Activated B cell treated with CpG ODN at 0.5 μM for 24 hours (primary cell): ENCODE measurements at regions of chr20 and their contacts with region 1.

Region 1: DNA sequence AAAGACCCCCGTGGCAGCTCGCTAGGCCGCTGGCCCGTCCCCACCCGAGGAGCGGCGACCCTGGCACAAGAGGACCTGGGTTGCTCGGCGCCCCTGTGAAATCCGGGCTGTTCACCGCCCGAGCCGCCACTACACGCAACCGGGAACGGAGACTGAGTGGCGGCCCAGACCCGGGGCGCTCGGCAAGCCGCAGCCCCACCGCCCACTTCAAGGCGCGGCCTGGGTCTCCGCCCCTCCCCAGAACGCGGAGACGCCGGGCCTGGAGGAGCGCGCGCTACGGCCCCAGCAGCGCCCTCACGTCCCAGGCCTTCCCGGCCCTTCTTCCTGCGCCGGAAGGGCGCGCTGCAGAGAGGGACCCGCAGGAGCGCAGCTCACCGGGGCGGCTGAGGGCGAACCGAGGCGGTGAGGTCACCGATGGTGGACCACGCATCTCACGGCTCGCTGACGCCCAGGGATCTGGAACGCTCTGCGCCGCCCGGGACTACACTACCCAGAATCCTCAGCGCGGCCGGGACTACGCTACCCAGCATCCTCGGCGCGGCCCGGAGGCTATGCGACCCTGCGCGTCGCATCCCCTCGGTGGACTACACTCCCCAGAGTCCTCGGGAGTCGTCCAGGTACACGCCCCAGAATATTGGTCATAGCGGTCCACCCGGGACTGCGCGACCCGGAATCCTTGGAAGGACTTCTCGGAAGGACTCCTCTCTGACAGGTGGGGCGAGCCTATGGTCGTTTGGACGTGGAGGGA is at the start of gene ZNF337:
- DNase-seq: peak; percentile 93
- ATAC-seq: peak; percentile 97
- H3K4me3 Mint-ChIP-seq: peak within 1 kb of the TSS; percentile 94
- H3K27ac Mint-ChIP-seq: peak within 1 kb of the TSS; percentile 85
- H3K4me1 Mint-ChIP-seq: peaks cover 30% of the 10 kb centered on the region
- H3K27me3 Mint-ChIP-seq: no peaks in the 10 kb centered on the region
- CTCF ChIP-seq: no peak
- total RNA-seq, gene ZNF337: 13.5 and 15.5 TPM in 2 replicates

Region 2: DNA sequence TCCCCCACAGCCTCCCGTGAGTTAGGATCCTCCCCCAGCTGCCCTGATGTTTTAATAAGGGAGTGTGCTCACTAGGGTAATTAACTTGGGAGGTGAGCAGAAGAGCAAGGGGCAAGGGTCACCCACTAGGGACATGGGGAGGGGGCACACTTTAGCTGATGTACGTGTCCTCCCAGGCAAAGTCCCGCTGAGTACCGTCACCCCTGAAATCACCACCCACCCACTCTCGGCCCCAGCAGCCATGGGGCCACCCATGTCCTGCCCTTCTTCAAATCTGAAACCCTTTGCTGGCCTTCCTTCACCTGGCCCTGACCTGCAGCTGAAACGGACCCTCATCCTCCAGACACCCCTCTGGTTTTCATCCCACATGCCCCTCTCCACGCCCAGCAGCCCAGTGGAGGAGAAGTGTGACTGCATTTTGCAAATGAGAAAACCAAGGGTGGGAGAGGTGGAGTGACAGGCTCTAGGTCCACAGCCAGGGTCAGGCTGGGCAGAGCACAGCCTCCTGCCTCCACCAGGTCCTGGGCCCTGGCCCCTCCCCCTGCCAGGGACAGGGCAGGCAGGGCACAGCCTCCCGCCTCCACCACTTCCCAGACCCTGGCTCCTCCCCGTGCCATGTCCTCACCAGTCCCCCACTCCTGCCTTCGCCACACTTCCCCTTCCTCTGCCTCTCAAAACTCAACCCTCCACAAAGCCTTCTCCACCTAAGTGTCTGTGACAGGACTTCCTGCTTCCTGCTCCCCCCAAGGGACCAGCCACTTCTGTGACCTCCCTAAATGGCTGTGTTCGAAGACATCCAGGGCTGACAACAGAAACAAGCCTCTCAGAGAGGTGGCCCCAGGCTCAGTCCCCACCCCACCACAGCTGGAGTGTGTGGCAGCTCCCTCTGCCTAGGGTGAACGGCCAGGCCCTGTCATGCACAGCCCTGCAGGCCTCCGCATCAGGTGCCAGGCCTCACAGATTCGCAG is 653.7 kb before region 1 on chr20:
- CTCF ChIA-PET with region 1: no interaction called
- POLR2A ChIA-PET with region 1: no interaction called
- intact Hi-C with region 1: loop called (anchors 2 kb)
- DNase-seq: peak; percentile 57
- ATAC-seq: peak; percentile 92
- H3K4me3 Mint-ChIP-seq: peak overlapping the region; percentile 51
- H3K27ac Mint-ChIP-seq: peak overlapping the region; percentile 90
- H3K4me1 Mint-ChIP-seq: peaks cover 70% of the 10 kb centered on the region
- H3K27me3 Mint-ChIP-seq: no peaks in the 10 kb centered on the region
- CTCF ChIP-seq: no peak

Region 3: DNA sequence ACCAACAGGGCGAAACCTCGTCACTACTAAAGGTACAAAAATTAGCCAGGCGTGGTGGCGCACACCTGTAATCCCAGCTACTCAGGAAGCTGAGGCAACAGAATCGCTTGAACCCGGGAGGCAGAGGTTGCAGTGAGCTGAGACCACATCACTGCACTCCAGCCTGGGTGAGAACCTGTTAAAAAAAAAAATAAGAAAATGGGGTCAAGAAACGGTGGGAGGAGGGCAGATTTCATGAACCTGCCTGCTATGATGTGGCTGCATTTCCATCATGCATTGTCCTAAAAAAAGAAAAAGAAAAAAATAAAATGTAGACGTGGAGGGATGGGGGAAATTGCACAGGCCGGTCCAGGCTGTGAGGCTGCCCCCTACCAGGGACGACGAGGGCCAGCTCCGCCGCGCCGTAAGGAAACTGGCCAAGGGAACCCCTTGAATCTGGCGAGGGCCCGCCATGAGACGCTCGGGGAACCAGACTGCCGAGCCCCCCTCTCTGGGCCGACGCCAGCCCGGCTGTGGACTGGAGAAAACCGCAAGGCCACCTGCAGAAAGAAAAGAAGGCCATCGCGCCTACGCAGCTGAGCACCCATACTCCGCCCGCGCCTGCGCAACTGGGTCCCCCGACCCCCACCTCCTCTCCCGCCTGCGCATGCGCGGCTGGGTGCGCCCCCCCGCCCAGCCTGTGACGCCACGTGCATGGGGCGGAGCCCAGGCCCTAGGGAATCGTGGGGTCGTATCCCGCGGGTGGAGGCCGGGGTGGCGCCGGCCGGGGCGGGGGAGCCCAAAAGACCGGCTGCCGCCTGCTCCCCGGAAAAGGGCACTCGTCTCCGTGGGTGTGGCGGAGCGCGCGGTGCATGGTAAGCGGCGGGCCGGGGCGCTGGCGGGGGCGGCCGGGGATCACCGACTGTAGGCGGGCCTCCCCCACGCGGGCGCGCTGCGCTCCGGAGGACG is 501.3 kb before region 1 on chr20 and contains the start of gene ENTPD6:
- CTCF ChIA-PET with region 1: no interaction called
- POLR2A ChIA-PET with region 1: no interaction called
- intact Hi-C with region 1: loop called (anchors 1 kb)
- DNase-seq: peak; percentile 99
- ATAC-seq: peak; percentile 82
- H3K4me3 Mint-ChIP-seq: peak within 1 kb of the TSS; percentile 90
- H3K27ac Mint-ChIP-seq: peak within 1 kb of the TSS; percentile 86
- H3K4me1 Mint-ChIP-seq: peaks cover 20% of the 10 kb centered on the region
- H3K27me3 Mint-ChIP-seq: no peaks in the 10 kb centered on the region
- CTCF ChIP-seq: no peak
- total RNA-seq, gene ENTPD6: 37.2 and 44.4 TPM in 2 replicates

Region 4: GRCh38 chr20:25390538-25391528 is 305.7 kb before region 1 on chr20 and contains the start of gene ABHD12:
- CTCF ChIA-PET with region 1: no interaction called
- POLR2A ChIA-PET with region 1: no interaction called
- intact Hi-C with region 1: loop called (anchors 1 kb)
- DNase-seq: peak; percentile 85
- ATAC-seq: peak; percentile 93
- H3K4me3 Mint-ChIP-seq: peak within 1 kb of the TSS; percentile 85
- H3K27ac Mint-ChIP-seq: peak within 1 kb of the TSS; percentile 76
- H3K4me1 Mint-ChIP-seq: peaks cover 17% of the 10 kb centered on the region
- H3K27me3 Mint-ChIP-seq: no peaks in the 10 kb centered on the region
- CTCF ChIP-seq: no peak
- total RNA-seq, gene ABHD12: 16.1 and 16.3 TPM in 2 replicates

Region 5: GRCh38 chr20:25584905-25585704 is 111.5 kb before region 1 on chr20 and contains the start of gene NINL:
- CTCF ChIA-PET with region 1: no interaction called
- POLR2A ChIA-PET with region 1: no interaction called
- intact Hi-C with region 1: loop called (anchors 1 kb)
- DNase-seq: peak; percentile 38
- ATAC-seq: peak; percentile 79
- H3K4me3 Mint-ChIP-seq: peak within 1 kb of the TSS; percentile 61
- H3K27ac Mint-ChIP-seq: no peak within 1 kb of the TSS
- H3K4me1 Mint-ChIP-seq: peaks cover 4% of the 10 kb centered on the region
- H3K27me3 Mint-ChIP-seq: peaks cover 32% of the 10 kb centered on the region
- CTCF ChIP-seq: no peak
- total RNA-seq, gene NINL: 1.0 and 1.8 TPM in 2 replicates

Region 6: DNA sequence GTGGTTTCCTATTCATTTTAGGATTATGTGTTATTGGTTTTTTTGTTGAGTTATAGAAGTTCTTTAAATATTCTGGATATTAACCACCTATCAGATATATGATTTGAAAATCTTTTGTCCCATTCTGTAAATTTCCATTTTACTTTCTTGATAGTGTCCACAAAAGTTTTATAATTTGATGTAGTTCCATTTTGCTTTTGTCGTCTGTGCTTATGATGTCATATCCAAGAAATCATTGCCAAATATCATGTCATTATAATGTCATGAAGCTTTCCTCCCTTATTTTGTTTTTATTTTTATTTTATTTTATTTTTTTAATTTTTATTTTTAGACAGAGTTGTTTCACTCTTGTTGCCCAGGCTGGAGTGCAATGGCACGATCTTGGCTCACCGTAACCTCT is 51.8 kb before region 1 on chr20:
- CTCF ChIA-PET with region 1: no interaction called
- POLR2A ChIA-PET with region 1: no interaction called
- intact Hi-C with region 1: no loop called
- DNase-seq: no peak
- ATAC-seq: no peak
- H3K4me3 Mint-ChIP-seq: no peak overlapping the region
- H3K27ac Mint-ChIP-seq: no peak overlapping the region
- H3K4me1 Mint-ChIP-seq: no peaks in the 10 kb centered on the region
- H3K27me3 Mint-ChIP-seq: no peaks in the 10 kb centered on the region
- CTCF ChIP-seq: no peak

Region 7: DNA sequence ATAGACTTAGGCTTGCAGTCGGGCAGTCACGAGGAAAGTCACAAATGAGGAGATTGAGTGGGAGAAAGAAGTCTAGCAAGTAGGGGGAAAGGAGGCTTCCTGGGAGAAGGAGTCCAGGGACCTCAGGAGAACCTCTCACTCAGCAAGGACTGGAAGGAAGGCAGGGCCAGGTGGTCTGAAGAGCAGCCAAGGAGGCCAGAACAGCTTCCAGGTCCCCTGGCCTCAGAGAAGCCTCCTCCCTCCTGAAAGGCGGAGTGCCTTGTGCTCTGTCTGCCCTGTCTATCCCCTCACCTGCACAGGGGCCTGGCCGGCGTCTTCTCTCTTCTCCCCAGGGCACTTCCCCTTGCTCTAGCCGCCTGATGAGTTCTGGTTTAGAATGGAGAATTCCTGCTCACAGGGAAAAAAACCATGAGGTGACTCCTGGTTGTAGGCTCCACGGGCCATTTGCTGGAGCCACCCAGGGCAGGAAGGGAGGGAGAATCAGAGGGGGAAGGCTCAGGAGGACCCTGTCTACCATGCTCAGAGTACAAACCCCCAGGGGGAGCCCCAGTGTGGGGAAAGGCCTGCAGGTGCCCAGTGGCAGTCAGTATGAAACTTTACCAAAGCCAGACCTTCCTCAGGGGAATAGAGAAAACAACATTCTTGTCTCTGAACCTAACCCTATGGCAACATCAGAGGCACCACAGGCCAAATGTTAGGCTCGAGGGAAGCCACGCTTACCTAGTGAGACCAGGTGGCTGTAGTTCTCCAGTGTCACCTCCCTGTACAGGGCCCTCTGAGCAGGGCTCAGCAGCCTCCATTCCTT is 11.1 kb before region 1 on chr20:
- CTCF ChIA-PET with region 1: no interaction called
- POLR2A ChIA-PET with region 1: no interaction called
- intact Hi-C with region 1: no loop called
- DNase-seq: no peak
- ATAC-seq: peak; percentile 90
- H3K4me3 Mint-ChIP-seq: no peak overlapping the region
- H3K27ac Mint-ChIP-seq: no peak overlapping the region
- H3K4me1 Mint-ChIP-seq: peaks cover 17% of the 10 kb centered on the region
- H3K27me3 Mint-ChIP-seq: no peaks in the 10 kb centered on the region
- CTCF ChIP-seq: no peak

Region 8: GRCh38 chr20:25706793-25707192 is 10.2 kb after region 1 on chr20:
- CTCF ChIA-PET with region 1: no interaction called
- POLR2A ChIA-PET with region 1: no interaction called
- intact Hi-C with region 1: loop called (anchors 1 kb)
- DNase-seq: no peak
- ATAC-seq: peak; percentile 83
- H3K4me3 Mint-ChIP-seq: peak overlapping the region; percentile 50
- H3K27ac Mint-ChIP-seq: peak overlapping the region; percentile 74
- H3K4me1 Mint-ChIP-seq: peaks cover 21% of the 10 kb centered on the region
- H3K27me3 Mint-ChIP-seq: no peaks in the 10 kb centered on the region
- CTCF ChIP-seq: no peak

Region 9: GRCh38 chr20:25720294-25720693 is 23.7 kb after region 1 on chr20:
- CTCF ChIA-PET with region 1: no interaction called
- POLR2A ChIA-PET with region 1: no interaction called
- intact Hi-C with region 1: no loop called
- DNase-seq: no peak
- ATAC-seq: no peak
- H3K4me3 Mint-ChIP-seq: no peak overlapping the region
- H3K27ac Mint-ChIP-seq: no peak overlapping the region
- H3K4me1 Mint-ChIP-seq: peaks cover 4% of the 10 kb centered on the region
- H3K27me3 Mint-ChIP-seq: no peaks in the 10 kb centered on the region
- CTCF ChIP-seq: no peak

Region 10: GRCh38 chr20:25987073-25987927 is 290.7 kb after region 1 on chr20:
- CTCF ChIA-PET with region 1: no interaction called
- POLR2A ChIA-PET with region 1: no interaction called
- intact Hi-C with region 1: loop called (anchors 5 kb)
- DNase-seq: peak; percentile 59
- ATAC-seq: peak; percentile 85
- H3K4me3 Mint-ChIP-seq: peak overlapping the region; percentile 81
- H3K27ac Mint-ChIP-seq: no peak overlapping the region
- H3K4me1 Mint-ChIP-seq: peaks cover 8% of the 10 kb centered on the region
- H3K27me3 Mint-ChIP-seq: peaks cover 4% of the 10 kb centered on the region
- CTCF ChIP-seq: no peak